ENCODE measurements at regions of chr20 and their contacts with region 1.

Region 1: GRCh38 chr20:3753098-3753980 is 14.2 kb downstream of the ADISSP start:
- DNase-seq: peak; percentile 60 to 67 (median 66)
- H3K4me3 ChIP-seq: no peak overlapping the region
- H3K4me3 Mint-ChIP-seq: no peak overlapping the region
- H3K27ac ChIP-seq: no peak overlapping the region
- H3K27ac Mint-ChIP-seq: peak overlapping the region in 3 of 7 donors; percentile 13 to 71 (median 42)
- H3K4me1 ChIP-seq: peaks cover 24 to 45% of the 10 kb centered on the region in 2 donors
- H3K4me1 Mint-ChIP-seq: peaks cover 31% of the 10 kb centered on the region
- H3K27me3 ChIP-seq: no peaks in the 10 kb centered on the region
- H3K27me3 Mint-ChIP-seq: peaks cover 0 to 4% (median 2%) of the 10 kb centered on the region in 3 donors
- CTCF ChIP-seq: peak; percentile 81

Region 2: GRCh38 chr20:3854462-3854871 is 101.1 kb after region 1 on chr20:
- intact Hi-C with region 1: loop called in 1 of 2 experiments (anchors 1 kb)
- DNase-seq: peak in 2 of 3 donors; percentile 11 to 17
- H3K4me3 ChIP-seq: no peak overlapping the region
- H3K4me3 Mint-ChIP-seq: peak overlapping the region in 1 of 2 donors; percentile 56
- H3K27ac ChIP-seq: peak overlapping the region; percentile 42 to 61
- H3K27ac Mint-ChIP-seq: peak overlapping the region; percentile 33 to 89 (median 82)
- H3K4me1 ChIP-seq: peaks cover 17 to 18% of the 10 kb centered on the region in 2 donors
- H3K4me1 Mint-ChIP-seq: peaks cover 22% of the 10 kb centered on the region
- H3K27me3 ChIP-seq: no peaks in the 10 kb centered on the region
- H3K27me3 Mint-ChIP-seq: peaks cover 0 to 3% (median 2%) of the 10 kb centered on the region in 3 donors
- CTCF ChIP-seq: no peak

Measured in CD14-positive monocyte (primary cell).